ENCODE measurements at regions of chr17 and their contacts with region 1.

Region 1: DNA sequence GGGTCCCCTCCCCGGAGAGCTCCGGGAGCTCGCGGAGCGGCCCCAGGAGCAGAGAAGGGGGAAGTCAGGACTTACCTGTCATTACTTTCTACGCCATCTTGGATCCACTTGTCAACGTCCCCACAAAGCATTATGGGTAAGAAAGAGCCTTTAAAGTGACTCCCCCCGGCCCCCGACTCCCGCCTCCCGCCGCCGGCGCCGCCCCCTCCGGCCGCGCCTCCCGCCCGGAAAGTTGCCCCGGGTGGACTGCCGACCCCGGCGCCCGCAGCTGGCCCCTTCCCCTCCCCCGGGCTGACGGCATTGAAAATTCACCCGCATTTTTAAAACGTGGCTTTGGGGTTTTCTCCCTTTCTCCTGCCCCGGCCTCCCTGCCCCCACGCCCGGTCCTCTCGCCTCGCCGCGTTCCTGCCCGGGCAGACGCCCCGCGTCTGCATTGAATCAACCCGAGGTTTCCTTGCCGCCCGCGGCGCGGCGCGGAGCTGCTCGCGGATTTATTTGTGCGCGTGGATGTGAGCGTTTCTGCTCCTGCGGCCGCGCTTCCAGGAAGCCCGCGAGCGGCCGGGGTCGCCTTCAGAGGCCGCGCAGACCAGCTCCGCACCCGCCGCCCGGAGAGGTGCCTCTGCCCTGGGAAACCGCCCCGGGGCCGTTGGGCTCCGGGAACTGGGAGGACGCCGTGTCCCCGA is at the start of gene HELZ:
- DNase-seq: peak; percentile 73 to 83
- ATAC-seq: peak; percentile 82 to 90 (median 86)
- H3K4me3 ChIP-seq: peak within 1 kb of the TSS; percentile 90
- H3K27ac ChIP-seq: peak within 1 kb of the TSS; percentile 91
- H3K4me1 ChIP-seq: peaks cover 38% of the 10 kb centered on the region
- H3K27me3 ChIP-seq: no peaks in the 10 kb centered on the region
- CTCF ChIP-seq: no peak
- total RNA-seq, gene HELZ: 30.8 to 55.7 (median 39.8) TPM

Region 2: GRCh38 chr17:67280279-67280678 is 35.1 kb after region 1 on chr17:
- intact Hi-C with region 1: loop called in 1 of 2 experiments (anchors 2 kb)
- DNase-seq: peak; percentile 35 to 76
- ATAC-seq: peak; percentile 92 to 97 (median 94)
- H3K4me3 ChIP-seq: no peak overlapping the region
- H3K27ac ChIP-seq: peak overlapping the region; percentile 66
- H3K4me1 ChIP-seq: peaks cover 21% of the 10 kb centered on the region
- H3K27me3 ChIP-seq: no peaks in the 10 kb centered on the region
- CTCF ChIP-seq: no peak

Region 3: DNA sequence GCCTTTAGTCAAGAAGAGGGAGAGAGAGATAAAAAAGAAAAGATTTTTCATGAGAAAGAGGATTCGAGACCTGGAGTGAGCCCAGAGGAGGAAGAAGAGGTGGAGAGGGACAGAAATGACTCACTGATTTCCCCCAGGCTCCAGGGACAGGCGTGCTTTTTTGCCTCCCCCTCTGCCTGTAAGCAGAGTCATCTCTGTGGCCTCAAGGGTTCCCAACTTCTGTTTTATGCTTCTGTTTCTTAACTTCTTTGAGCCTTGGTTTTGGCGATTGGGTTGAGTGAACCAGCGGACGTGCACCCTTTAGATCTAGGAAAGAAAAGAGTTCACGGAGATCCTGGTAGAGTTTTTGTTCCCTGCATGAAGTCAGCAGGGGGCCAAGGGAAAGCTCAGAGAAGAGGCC is 324.7 kb after region 1 on chr17:
- intact Hi-C with region 1: no loop called
- DNase-seq: no peak
- ATAC-seq: no peak
- H3K4me3 ChIP-seq: no peak overlapping the region
- H3K27ac ChIP-seq: no peak overlapping the region
- H3K4me1 ChIP-seq: no peaks in the 10 kb centered on the region
- H3K27me3 ChIP-seq: no peaks in the 10 kb centered on the region
- CTCF ChIP-seq: no peak

Measured in psoas muscle (tissue), 8 donors.